Left lung (tissue), 14 donors: ENCODE measurements at regions of chrX and their contacts with region 1.

Region 1: DNA sequence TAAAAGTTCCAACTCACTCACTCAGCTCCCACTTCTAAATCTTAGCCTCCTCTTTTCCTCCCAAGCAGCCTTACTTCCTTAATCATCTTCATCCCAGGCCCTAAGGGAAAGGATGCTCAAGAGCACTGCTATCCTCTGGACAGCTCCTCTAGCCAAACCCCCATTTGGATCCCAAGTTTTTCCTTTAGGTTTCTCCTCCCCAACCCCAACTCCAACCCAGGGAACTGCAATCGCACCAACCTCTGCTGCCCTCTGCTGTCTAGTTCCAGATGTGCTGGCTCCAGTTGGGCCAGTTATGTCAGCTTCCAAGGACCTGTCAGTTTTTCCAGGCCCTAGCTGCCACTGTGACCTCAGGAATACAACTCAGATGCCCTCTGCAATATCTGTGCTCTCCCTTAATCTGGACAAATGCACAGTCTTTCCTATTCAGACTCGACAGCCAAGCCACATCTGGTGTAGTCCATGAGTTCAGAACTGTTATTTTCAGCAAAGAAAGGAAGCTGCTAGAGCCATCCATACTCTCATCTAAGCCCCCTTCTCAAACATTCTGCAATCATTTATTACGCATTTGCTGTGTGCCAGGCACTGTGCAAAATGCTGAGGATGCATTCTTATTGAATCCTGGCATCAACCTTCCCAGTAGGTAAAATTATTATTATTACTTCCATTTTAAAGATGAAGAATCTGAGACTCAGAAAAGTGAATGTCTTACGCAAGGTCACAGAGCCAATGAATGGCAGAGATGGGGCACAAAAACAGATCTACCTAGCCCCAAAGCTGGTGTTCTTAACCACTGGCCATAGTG is 12.3 kb upstream of the XPNPEP2 start:
- DNase-seq: peak in 3 of 4 donors; percentile 29 to 58 (median 44)
- ATAC-seq: peak; percentile 93
- H3K4me3 ChIP-seq: no peak overlapping the region
- H3K27ac ChIP-seq: no peak overlapping the region
- H3K4me1 ChIP-seq: no peaks in the 10 kb centered on the region
- H3K27me3 ChIP-seq: peaks cover 0 to 4% of the 10 kb centered on the region in 2 donors
- CTCF ChIP-seq: peak; percentile 63 to 70

Region 2: DNA sequence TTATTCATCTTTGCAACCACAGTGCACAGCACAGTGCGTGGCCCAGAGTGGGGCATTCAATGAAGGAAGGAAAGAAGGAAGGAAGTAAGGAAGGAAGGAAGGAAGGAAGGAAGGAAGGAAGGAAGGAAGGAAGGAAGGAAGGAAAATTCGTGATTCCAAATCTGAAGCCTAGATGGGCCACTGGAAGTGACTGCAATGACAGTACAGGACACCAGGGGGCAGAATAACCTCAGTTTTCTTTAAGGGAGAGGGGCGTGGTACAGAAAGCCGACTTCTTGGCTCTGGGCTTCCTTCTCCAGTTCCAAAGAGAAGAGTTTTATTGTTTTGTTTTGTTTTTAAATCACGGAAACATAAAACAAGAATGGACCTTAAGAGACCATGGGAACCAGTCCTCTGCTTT is 119.6 kb before region 1 on chrX:
- intact Hi-C with region 1: loop called in 1 of 2 experiments (anchors 10 kb)
- DNase-seq: peak in 2 of 4 donors; percentile 47 to 66
- ATAC-seq: peak; percentile 79
- H3K4me3 ChIP-seq: no peak overlapping the region
- H3K27ac ChIP-seq: no peak overlapping the region
- H3K4me1 ChIP-seq: no peaks in the 10 kb centered on the region
- H3K27me3 ChIP-seq: no peaks in the 10 kb centered on the region
- CTCF ChIP-seq: peak; percentile 67 to 79

Region 3: DNA sequence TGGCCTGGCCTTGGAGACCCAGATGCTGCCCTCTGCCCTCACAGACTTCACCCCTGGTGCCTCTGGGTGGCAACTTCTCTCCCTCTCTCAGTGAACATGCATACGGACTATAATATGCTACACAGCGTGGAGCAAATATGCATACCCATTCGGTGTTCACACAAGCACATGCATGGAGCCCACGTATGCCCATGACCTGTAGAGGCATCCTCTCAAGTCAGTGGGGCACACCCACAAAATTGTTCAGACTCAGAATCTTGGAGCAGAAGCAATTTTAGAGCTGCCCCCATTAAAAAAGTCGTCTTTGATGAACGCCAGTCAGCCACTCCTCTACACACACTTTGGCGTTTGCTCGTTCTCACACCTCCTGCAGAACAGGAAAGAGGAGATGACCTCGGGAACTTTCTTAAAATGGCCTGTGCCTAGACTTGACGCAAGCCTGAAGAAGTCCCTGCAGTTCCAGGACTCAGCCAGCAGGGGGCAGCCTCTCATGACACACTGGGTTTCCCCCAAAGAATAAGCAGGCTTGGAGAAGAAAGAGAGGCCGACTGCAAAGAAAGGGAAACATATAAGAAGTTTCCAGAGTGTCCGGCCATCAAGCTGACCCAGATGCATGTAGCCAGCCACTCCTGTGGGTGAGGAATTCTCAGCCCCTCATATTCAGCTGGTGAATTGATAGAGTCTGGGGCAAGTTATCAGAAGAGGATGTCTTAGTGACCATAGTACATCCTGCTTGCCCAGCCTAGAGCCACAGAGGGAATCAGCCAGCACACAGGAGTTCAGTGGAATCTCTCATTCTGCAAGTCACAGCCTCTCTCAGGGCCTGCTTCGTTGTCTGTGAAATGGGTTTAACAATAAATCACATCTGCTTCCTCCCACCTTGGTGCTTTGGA is 89.0 kb before region 1 on chrX:
- intact Hi-C with region 1: loop called in 1 of 2 experiments (anchors 10 kb)
- DNase-seq: peak; percentile 50 to 85 (median 62)
- ATAC-seq: peak; percentile 95
- H3K4me3 ChIP-seq: no peak overlapping the region
- H3K27ac ChIP-seq: no peak overlapping the region
- H3K4me1 ChIP-seq: no peaks in the 10 kb centered on the region
- H3K27me3 ChIP-seq: no peaks in the 10 kb centered on the region
- CTCF ChIP-seq: peak; percentile 89 to 94

Region 4: DNA sequence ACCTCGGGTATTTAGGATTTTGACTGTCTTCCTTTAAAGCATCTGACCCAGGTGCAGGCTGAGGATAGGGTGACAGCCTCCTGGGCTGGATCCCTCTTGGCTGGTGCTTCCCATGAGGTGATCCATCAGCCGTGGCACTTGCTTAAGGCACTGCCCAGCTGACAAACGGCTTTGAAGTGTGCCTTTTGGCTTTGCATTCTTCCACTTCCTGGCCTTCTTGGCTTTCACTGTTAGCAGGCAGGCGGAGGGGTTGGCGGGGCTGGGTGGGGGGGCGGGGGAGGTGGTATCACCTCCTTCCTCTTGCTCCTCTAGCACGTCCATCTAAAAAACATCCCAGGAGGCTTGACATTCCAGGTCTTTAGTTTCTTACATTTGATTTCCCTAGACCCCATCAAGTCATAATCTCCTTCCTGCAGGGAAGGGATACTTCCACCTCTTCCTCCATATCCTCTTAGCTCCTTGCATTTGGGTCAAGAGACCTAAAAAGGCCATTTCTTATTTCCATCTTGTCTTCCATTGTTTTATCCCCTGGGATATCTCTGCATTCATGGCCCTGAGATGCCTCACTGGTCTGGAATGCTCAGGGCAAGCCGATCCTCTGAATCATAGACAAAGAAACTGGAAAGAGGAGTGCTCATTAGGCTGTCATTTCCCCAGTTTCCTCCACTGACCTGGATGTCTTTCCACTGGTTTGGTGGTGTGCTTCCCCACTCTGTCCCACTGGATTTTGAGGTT is 60.4 kb before region 1 on chrX:
- intact Hi-C with region 1: no loop called
- DNase-seq: no peak
- ATAC-seq: peak; percentile 75
- H3K4me3 ChIP-seq: no peak overlapping the region
- H3K27ac ChIP-seq: no peak overlapping the region
- H3K4me1 ChIP-seq: no peaks in the 10 kb centered on the region
- H3K27me3 ChIP-seq: no peaks in the 10 kb centered on the region
- CTCF ChIP-seq: no peak

Region 5: GRCh38 chrX:129690435-129690834 is 36.1 kb before region 1 on chrX:
- intact Hi-C with region 1: no loop called
- DNase-seq: no peak
- ATAC-seq: no peak
- H3K4me3 ChIP-seq: no peak overlapping the region
- H3K27ac ChIP-seq: no peak overlapping the region
- H3K4me1 ChIP-seq: no peaks in the 10 kb centered on the region
- H3K27me3 ChIP-seq: no peaks in the 10 kb centered on the region
- CTCF ChIP-seq: no peak